Mammary epithelial cell (primary cell): ENCODE measurements at regions of chr16 and their contacts with region 1.

Region 1: DNA sequence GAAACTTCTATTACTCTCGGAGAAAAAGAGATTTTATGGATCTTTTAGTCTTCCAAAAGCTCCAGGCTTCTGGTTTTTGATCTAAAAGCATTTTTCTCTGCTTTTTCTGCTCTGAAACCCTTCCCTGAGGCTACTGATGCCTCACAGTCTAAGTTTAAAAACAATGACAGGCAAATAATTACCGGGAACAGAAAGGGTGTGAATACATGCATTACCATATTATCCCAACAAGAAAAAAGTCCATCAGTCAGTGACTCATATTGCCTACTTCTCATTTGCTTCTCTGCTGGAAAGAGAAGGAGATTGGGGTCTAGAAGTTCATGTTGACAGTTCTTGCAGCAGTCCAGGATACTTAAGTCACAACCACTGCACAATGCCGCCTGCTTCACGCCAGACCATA is 482.9 kb upstream of the C16orf82 start:
- DNase-seq: no peak
- H3K4me3 ChIP-seq: no peak overlapping the region
- H3K27ac ChIP-seq: no peak overlapping the region
- H3K4me1 ChIP-seq: no peaks in the 10 kb centered on the region
- H3K27me3 ChIP-seq: no peaks in the 10 kb centered on the region
- CTCF ChIP-seq: no peak

Region 2: GRCh38 chr16:26627958-26628357 is 44.2 kb after region 1 on chr16:
- CTCF ChIA-PET with region 1: no interaction called
- dilution Hi-C with region 1: loop called (anchors 5 kb)
- in situ Hi-C with region 1: no loop called
- intact Hi-C with region 1: no loop called
- DNase-seq: no peak
- H3K4me3 ChIP-seq: no peak overlapping the region
- H3K27ac ChIP-seq: no peak overlapping the region
- H3K4me1 ChIP-seq: no peaks in the 10 kb centered on the region
- H3K27me3 ChIP-seq: no peaks in the 10 kb centered on the region
- CTCF ChIP-seq: no peak

Region 3: DNA sequence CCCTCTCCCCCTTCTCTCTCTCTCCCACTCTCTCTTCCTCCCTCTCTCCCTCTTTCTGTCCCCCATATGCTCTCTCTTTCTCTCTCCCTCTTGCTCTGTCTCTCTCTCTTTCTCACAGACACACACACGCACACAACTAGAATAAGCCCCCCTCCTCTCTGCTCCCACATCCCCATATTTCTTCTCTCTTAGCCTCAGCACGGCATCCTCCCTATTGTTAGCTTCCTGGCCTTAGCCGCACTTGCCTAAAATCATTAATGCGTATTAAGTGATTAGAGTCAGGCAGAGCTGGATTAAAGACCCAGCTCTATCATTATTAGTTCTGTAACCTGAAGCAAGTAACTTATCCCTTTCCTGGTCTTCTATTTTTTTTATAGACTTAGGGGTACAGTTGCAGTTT is 164.0 kb after region 1 on chr16:
- CTCF ChIA-PET with region 1: no interaction called
- dilution Hi-C with region 1: no loop called
- in situ Hi-C with region 1: no loop called
- intact Hi-C with region 1: no loop called
- DNase-seq: no peak
- H3K4me3 ChIP-seq: no peak overlapping the region
- H3K27ac ChIP-seq: no peak overlapping the region
- H3K4me1 ChIP-seq: no peaks in the 10 kb centered on the region
- H3K27me3 ChIP-seq: no peaks in the 10 kb centered on the region
- CTCF ChIP-seq: no peak